ENCODE measurements at regions of chr5 and their contacts with region 1.

Region 1: GRCh38 chr5:129767906-129768380 is 20.0 kb downstream of the MINAR2 start:
- DNase-seq: peak; percentile 66
- ATAC-seq: peak; percentile 73
- H3K4me3 Mint-ChIP-seq: peak overlapping the region; percentile 36; the same call in 1 of the 2 replicates
- H3K27ac Mint-ChIP-seq: no peak overlapping the region
- H3K4me1 Mint-ChIP-seq: peaks cover 15% of the 10 kb centered on the region
- H3K27me3 Mint-ChIP-seq: no peaks in the 10 kb centered on the region
- CTCF ChIP-seq: peak; percentile 91

Region 2: GRCh38 chr5:129460936-129461711 is 306.8 kb before region 1 on chr5:
- CTCF ChIA-PET with region 1: interaction called, 17 read pairs
- POLR2A ChIA-PET with region 1: no interaction called
- DNase-seq: peak; percentile 80
- ATAC-seq: peak; percentile 54
- H3K4me3 Mint-ChIP-seq: peak overlapping the region; percentile 99
- H3K27ac Mint-ChIP-seq: peak overlapping the region; percentile 97; the same call in 1 of the 2 replicates
- H3K4me1 Mint-ChIP-seq: peaks cover 47% of the 10 kb centered on the region
- H3K27me3 Mint-ChIP-seq: no peaks in the 10 kb centered on the region
- CTCF ChIP-seq: no peak

Region 3: DNA sequence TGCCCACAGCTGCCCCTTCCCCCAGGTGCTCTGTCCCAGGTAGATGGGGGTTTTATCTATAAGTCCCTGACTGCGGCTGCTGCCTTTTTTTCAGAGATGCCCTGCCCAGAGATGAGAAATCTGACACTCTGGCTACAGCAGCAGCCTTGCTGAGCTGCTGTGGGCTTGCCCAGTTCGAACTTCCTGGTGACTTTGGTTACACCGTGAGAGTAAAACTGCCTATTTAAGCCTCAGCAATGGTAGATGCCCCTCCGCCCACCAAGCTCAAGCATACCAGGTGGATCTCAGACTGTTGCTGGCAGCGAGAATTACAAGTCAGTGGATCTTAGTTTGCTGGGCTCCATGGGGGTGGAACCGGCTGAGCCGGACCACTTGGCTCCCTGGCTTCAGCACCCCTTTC is 36.8 kb after region 1 on chr5:
- CTCF ChIA-PET with region 1: interaction called, 17 read pairs
- POLR2A ChIA-PET with region 1: no interaction called
- DNase-seq: peak; percentile 27
- ATAC-seq: peak; percentile 94
- H3K4me3 Mint-ChIP-seq: no peak overlapping the region
- H3K27ac Mint-ChIP-seq: no peak overlapping the region
- H3K4me1 Mint-ChIP-seq: peaks cover 6% of the 10 kb centered on the region
- H3K27me3 Mint-ChIP-seq: no peaks in the 10 kb centered on the region; the same call in 1 of the 2 replicates
- CTCF ChIP-seq: no peak

Region 4: GRCh38 chr5:129821477-129822131 is 53.7 kb after region 1 on chr5:
- CTCF ChIA-PET with region 1: interaction called, 15 read pairs
- POLR2A ChIA-PET with region 1: no interaction called
- DNase-seq: no peak
- ATAC-seq: no peak
- H3K4me3 Mint-ChIP-seq: no peak overlapping the region
- H3K27ac Mint-ChIP-seq: no peak overlapping the region
- H3K4me1 Mint-ChIP-seq: no peaks in the 10 kb centered on the region
- H3K27me3 Mint-ChIP-seq: no peaks in the 10 kb centered on the region; the same call in 1 of the 2 replicates
- CTCF ChIP-seq: no peak

Region 5: GRCh38 chr5:129852747-129853352 is 84.9 kb after region 1 on chr5:
- CTCF ChIA-PET with region 1: interaction called, 208 read pairs
- POLR2A ChIA-PET with region 1: no interaction called
- DNase-seq: peak; percentile 91
- ATAC-seq: peak; percentile 99
- H3K4me3 Mint-ChIP-seq: no peak overlapping the region
- H3K27ac Mint-ChIP-seq: no peak overlapping the region
- H3K4me1 Mint-ChIP-seq: no peaks in the 10 kb centered on the region
- H3K27me3 Mint-ChIP-seq: no peaks in the 10 kb centered on the region
- CTCF ChIP-seq: peak; percentile 88

Region 6: DNA sequence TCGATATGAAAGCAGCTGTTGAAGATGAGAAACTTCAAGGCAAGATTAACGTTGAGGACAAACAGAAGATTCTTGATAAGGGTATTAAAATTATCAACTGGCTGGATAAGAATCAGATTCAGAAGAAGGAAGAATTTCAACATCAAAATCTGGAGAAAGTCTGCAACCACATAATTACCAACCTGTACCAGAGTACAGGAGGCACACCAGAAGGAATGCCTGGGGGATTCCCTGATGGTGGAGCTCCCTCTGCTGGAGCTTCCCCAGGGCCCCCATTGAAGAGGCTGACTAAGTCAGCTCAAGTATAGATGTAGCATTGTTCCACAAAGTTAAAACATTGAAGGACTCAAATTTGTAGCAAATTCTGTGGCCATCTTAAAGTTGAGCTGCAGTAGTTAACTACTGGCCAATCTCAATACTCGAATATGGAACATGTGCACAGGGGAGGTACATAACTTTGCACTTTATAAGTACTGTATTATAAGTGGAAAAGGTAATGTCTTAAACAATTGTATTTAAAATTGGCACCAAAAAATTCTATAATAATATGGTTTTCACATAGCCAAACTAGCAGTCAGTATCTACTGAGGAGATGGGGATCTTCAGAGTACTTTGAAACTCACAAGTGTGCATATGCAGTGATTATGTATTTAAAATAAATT is 373.8 kb after region 1 on chr5:
- CTCF ChIA-PET with region 1: interaction called, 24 read pairs
- POLR2A ChIA-PET with region 1: no interaction called
- DNase-seq: peak; percentile 74
- ATAC-seq: peak; percentile 100
- H3K4me3 Mint-ChIP-seq: no peak overlapping the region
- H3K27ac Mint-ChIP-seq: no peak overlapping the region
- H3K4me1 Mint-ChIP-seq: peaks cover 12% of the 10 kb centered on the region
- H3K27me3 Mint-ChIP-seq: no peaks in the 10 kb centered on the region
- CTCF ChIP-seq: peak; percentile 56; the same call in 1 of the 2 replicates

Measured in WTC11 (cell line).